ENCODE measurements at regions of chr19 and their contacts with region 1.

Region 1: DNA sequence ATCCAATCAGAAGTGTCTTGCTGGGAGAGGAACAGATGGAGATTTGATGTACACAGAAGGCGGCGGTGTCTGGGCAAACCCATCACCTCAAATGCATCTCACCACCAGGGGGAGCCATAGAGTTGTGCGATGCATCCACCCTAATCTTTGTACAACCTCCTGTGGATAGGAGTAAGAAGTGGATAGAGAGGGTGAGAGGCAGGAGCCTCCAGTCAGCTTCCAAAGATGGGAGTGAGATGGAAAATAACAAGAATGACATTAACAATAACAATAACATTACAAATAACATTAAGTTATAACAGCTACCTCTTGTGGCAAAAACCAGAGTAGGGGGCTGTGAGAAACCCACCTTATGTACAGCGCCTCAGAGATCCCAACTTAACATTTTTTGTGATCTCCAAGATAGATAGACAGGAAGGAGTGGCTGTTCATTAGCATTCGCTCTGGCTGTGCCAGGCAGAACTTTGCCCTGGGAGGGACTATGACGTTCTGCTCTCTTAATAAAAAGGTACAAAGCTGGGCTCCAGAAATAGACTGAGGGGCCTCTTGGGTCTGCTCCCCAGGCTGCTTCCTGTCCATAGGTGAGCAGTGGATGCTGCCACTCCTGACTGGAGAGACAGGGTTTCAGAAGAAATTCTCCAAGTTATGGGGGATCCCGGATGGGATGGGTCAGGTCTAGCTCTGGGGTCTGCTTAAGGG is 5.2 kb upstream of the CEACAM18 start:
- DNase-seq: peak; percentile 86
- ATAC-seq: peak; percentile 66
- H3K4me3 ChIP-seq: no peak overlapping the region
- H3K4me3 Mint-ChIP-seq: no peak overlapping the region
- H3K27ac ChIP-seq: no peak overlapping the region
- H3K27ac Mint-ChIP-seq: no peak overlapping the region
- H3K4me1 ChIP-seq: peaks cover 4 to 5% of the 10 kb centered on the region in 2 donors
- H3K4me1 Mint-ChIP-seq: peaks cover 4% of the 10 kb centered on the region
- H3K27me3 ChIP-seq: peaks cover 0 to 16% (median 1%) of the 10 kb centered on the region in 4 experiments
- H3K27me3 Mint-ChIP-seq: peaks cover 25% of the 10 kb centered on the region
- CTCF ChIP-seq: peak; percentile 98

Region 2: DNA sequence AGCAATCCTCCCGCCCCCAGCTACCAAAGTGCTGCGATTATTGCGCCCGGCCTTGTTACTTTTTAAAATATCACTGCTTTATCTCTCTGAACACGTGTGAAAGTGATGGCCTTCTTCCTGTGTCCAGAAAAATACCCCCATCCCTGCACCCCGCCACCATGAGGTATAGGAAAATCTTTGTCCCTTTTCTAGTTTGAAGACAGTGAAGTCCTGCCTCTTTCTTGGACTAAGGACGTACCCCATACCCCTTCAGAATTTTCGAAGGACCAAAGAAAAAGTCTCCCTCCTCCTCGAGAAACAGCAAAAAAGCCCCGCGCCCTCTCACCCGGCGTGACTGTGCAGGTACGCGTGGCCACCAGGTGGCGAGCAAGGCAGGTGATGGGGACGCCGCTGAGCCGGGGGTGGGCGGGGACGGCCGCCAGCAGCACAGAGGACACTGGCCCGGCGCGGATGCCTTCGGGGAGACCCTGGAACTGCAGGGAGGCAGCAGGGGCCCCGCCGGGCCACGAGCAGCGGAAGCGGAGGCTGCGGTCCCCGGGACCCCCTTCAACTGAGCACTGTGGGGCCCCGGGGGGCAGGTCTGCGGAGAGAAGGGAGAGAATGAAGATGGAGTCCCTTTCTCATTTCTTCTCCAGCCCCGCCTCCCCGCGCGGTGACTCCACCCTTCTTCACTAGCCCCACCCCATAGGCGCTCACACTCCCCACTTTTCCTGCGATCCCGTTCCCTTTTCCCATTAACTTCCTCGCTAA is 134.4 kb before region 1 on chr19:
- CTCF ChIA-PET with region 1: interaction called, 8 read pairs
- POLR2A ChIA-PET with region 1: no interaction called
- intact Hi-C with region 1: loop called (anchors 1 kb)
- DNase-seq: peak; percentile 93
- ATAC-seq: peak; percentile 60
- H3K4me3 ChIP-seq: peak overlapping the region; percentile 11 to 77 (median 58)
- H3K4me3 Mint-ChIP-seq: peak overlapping the region; percentile 97
- H3K27ac ChIP-seq: no peak overlapping the region
- H3K27ac Mint-ChIP-seq: peak overlapping the region; percentile 80
- H3K4me1 ChIP-seq: peaks cover 22 to 42% of the 10 kb centered on the region in 2 donors
- H3K4me1 Mint-ChIP-seq: peaks cover 36% of the 10 kb centered on the region
- H3K27me3 ChIP-seq: no peaks in the 10 kb centered on the region
- H3K27me3 Mint-ChIP-seq: no peaks in the 10 kb centered on the region
- CTCF ChIP-seq: peak; percentile 87

Region 3: GRCh38 chr19:51461723-51462161 is 11.4 kb before region 1 on chr19:
- CTCF ChIA-PET with region 1: interaction called, 12 read pairs
- POLR2A ChIA-PET with region 1: interaction called, 3 read pairs
- intact Hi-C with region 1: no loop called
- DNase-seq: no peak
- ATAC-seq: no peak
- H3K4me3 ChIP-seq: no peak overlapping the region
- H3K4me3 Mint-ChIP-seq: no peak overlapping the region
- H3K27ac ChIP-seq: no peak overlapping the region
- H3K27ac Mint-ChIP-seq: no peak overlapping the region
- H3K4me1 ChIP-seq: peaks cover 0 to 7% of the 10 kb centered on the region in 2 donors
- H3K4me1 Mint-ChIP-seq: no peaks in the 10 kb centered on the region
- H3K27me3 ChIP-seq: peaks cover 0 to 28% (median 10%) of the 10 kb centered on the region in 4 experiments
- H3K27me3 Mint-ChIP-seq: peaks cover 30% of the 10 kb centered on the region
- CTCF ChIP-seq: no peak

Region 4: GRCh38 chr19:51531349-51532315 is 58.5 kb after region 1 on chr19 and contains the start of gene SIGLEC6:
- CTCF ChIA-PET with region 1: interaction called, 11 read pairs
- POLR2A ChIA-PET with region 1: no interaction called
- intact Hi-C with region 1: no loop called
- DNase-seq: peak; percentile 88
- ATAC-seq: peak; percentile 96
- H3K4me3 ChIP-seq: peak within 1 kb of the TSS in 4 of 5 experiments; percentile 51 to 60 (median 56)
- H3K4me3 Mint-ChIP-seq: peak within 1 kb of the TSS; percentile 88
- H3K27ac ChIP-seq: peak within 1 kb of the TSS; percentile 32 to 33
- H3K27ac Mint-ChIP-seq: peak within 1 kb of the TSS; percentile 83
- H3K4me1 ChIP-seq: peaks cover 25 to 41% of the 10 kb centered on the region in 2 donors
- H3K4me1 Mint-ChIP-seq: peaks cover 78% of the 10 kb centered on the region
- H3K27me3 ChIP-seq: no peaks in the 10 kb centered on the region
- H3K27me3 Mint-ChIP-seq: no peaks in the 10 kb centered on the region
- CTCF ChIP-seq: no peak
- total RNA-seq, gene SIGLEC6: 21.2 and 28.9 TPM in 2 replicates

Region 5: DNA sequence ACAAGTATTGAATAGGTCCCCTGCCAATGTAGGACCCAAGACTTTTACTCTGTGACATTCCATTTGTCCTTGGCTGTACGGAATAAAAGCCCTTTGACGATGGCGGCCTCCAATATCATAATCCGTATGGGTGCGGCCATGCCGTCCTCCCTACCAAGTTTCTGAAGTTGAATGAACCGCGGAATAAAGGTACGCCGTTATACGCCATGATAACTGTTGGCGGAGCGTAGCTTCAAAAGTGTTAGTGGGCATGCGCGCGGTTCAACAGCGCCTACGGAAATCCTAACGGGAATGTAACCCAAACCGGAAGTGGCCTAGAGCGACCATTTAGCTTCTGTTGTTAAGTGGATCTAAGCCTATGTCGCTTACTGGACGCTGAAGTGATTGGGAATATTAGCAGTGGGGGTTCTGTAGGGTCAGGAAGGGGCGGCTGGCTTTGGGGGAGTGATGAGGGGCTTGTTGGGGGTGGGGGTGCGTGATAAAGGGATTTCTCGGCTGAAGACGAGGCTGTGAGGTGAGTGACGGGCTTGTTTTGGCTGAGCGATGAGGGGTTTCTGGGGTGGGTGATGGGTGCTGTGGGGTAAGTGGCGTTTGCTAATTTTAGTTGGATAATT is 97.9 kb after region 1 on chr19 and contains the start of gene ZNF175:
- CTCF ChIA-PET with region 1: interaction called, 5 read pairs
- POLR2A ChIA-PET with region 1: no interaction called
- intact Hi-C with region 1: loop called (anchors 5 kb)
- DNase-seq: peak; percentile 91
- ATAC-seq: peak; percentile 96
- H3K4me3 ChIP-seq: peak within 1 kb of the TSS; percentile 59 to 84 (median 81)
- H3K4me3 Mint-ChIP-seq: peak within 1 kb of the TSS; percentile 88
- H3K27ac ChIP-seq: peak within 1 kb of the TSS in 1 of 2 donors; percentile 59
- H3K27ac Mint-ChIP-seq: peak within 1 kb of the TSS; percentile 83
- H3K4me1 ChIP-seq: peaks cover 19% of the 10 kb centered on the region in 2 donors
- H3K4me1 Mint-ChIP-seq: peaks cover 38% of the 10 kb centered on the region
- H3K27me3 ChIP-seq: no peaks in the 10 kb centered on the region
- H3K27me3 Mint-ChIP-seq: no peaks in the 10 kb centered on the region
- CTCF ChIP-seq: no peak
- total RNA-seq, gene ZNF175: 31.3 and 33.0 TPM in 2 replicates

Region 6: DNA sequence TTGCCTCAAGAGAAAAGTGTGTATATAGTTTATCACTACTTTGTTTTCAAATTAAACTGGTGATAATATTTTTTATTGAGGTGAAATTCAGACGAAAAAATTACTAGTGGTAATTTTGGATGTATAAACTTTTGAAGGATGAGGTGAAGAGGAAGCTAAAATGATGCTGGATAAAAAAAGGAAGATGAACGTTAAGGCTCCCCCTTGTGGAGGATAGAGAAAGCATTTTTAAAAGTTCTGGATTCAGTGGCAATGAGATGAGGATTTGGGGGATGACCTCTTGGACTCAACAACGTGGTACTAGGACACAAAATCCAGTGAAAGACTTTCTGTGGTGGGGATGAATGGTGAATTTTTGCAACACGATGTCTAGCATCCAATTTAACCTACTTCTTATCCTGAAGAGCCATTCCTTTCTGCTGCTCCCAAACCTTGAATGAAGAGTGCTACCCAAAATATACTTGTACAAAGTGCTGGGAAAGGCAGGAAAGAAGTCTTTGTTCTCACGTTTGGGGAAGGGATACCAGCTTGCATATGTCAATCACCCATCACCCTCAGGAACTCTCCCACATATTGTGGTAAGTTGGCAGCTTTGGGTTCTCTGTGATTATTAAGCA is 164.3 kb after region 1 on chr19:
- CTCF ChIA-PET with region 1: interaction called, 21 read pairs
- POLR2A ChIA-PET with region 1: no interaction called
- intact Hi-C with region 1: no loop called
- DNase-seq: peak; percentile 67
- ATAC-seq: no peak
- H3K4me3 ChIP-seq: no peak overlapping the region
- H3K4me3 Mint-ChIP-seq: no peak overlapping the region
- H3K27ac ChIP-seq: no peak overlapping the region
- H3K27ac Mint-ChIP-seq: no peak overlapping the region
- H3K4me1 ChIP-seq: peaks cover 0 to 47% of the 10 kb centered on the region in 2 donors
- H3K4me1 Mint-ChIP-seq: peaks cover 27% of the 10 kb centered on the region
- H3K27me3 ChIP-seq: no peaks in the 10 kb centered on the region
- H3K27me3 Mint-ChIP-seq: no peaks in the 10 kb centered on the region
- CTCF ChIP-seq: peak; percentile 68

Region 7: DNA sequence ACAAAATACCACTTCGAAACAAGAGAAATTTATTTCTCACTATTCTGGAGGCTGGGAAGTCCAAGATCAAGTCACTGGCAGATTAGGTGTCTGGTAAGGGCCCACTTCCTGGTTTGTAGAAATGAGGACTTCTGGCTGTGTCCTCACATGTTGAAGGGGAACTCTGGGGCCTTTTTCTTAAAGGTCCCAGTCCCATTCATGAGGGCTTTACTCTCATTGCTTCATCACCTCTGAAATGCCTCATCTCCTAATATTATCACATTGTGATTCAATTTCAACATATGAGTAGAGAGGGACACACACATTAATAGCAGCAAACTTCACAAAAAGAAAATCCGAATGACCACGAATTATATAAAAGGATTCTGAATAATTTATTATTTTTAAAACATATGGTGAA is 195.1 kb after region 1 on chr19:
- CTCF ChIA-PET with region 1: interaction called, 681 read pairs
- POLR2A ChIA-PET with region 1: no interaction called
- intact Hi-C with region 1: no loop called
- DNase-seq: no peak
- ATAC-seq: no peak
- H3K4me3 ChIP-seq: no peak overlapping the region
- H3K4me3 Mint-ChIP-seq: no peak overlapping the region
- H3K27ac ChIP-seq: no peak overlapping the region
- H3K27ac Mint-ChIP-seq: no peak overlapping the region
- H3K4me1 ChIP-seq: no peaks in the 10 kb centered on the region
- H3K4me1 Mint-ChIP-seq: no peaks in the 10 kb centered on the region
- H3K27me3 ChIP-seq: peaks cover 0 to 28% (median 22%) of the 10 kb centered on the region in 4 experiments
- H3K27me3 Mint-ChIP-seq: peaks cover 57% of the 10 kb centered on the region
- CTCF ChIP-seq: no peak